MCF 10A (cell line): ENCODE measurements at regions of chr2 and their contacts with region 1.

Region 1: GRCh38 chr2:72973566-72974435 is 56.5 kb downstream of the EMX1 start:
- DNase-seq: peak; percentile 64
- H3K4me3 Mint-ChIP-seq: no peak overlapping the region
- H3K27ac Mint-ChIP-seq: no peak overlapping the region
- H3K4me1 Mint-ChIP-seq: no peaks in the 10 kb centered on the region
- H3K27me3 Mint-ChIP-seq: no peaks in the 10 kb centered on the region
- CTCF ChIP-seq: peak; percentile 85

Region 2: GRCh38 chr2:72984172-72984671 is 10.4 kb after region 1 on chr2:
- CTCF ChIA-PET with region 1: interaction called, 19 read pairs
- POLR2A ChIA-PET with region 1: no interaction called
- intact Hi-C with region 1: no loop called
- DNase-seq: no peak
- H3K4me3 Mint-ChIP-seq: no peak overlapping the region
- H3K27ac Mint-ChIP-seq: no peak overlapping the region
- H3K4me1 Mint-ChIP-seq: peaks cover 9% of the 10 kb centered on the region
- H3K27me3 Mint-ChIP-seq: no peaks in the 10 kb centered on the region
- CTCF ChIP-seq: no peak

Region 3: DNA sequence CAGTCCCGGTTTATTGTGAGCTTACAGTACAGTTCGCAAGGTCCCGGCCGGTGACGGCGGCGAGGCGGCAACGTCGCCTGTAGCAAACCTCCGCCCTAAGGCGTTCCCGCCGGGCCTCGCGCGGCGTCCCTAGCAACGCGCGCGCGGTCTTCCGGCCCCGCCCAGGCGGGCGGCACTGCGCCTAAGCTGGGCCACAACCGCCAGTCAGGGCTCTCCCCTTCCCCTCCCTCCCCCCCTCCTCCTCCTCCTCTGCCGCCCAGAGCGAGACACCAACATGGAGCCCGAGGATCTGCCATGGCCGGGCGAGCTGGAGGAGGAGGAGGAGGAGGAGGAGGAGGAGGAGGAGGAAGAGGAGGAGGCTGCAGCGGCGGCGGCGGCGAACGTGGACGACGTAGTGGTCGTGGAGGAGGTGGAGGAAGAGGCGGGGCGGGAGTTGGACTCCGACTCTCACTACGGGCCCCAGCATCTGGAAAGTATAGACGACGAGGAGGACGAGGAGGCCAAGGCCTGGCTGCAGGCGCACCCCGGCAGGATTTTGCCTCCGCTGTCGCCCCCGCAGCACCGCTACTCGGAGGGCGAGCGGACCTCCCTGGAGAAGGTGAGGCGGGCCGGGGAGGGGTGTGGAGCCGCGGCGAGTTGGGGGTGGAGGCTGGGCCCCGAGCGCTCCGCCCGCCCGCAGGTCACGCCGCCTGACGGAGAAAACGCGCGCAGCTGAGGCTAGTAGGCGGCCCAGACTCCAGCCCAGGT is 412.0 kb after region 1 on chr2 and contains the start of gene ALMS1:
- CTCF ChIA-PET with region 1: no interaction called
- POLR2A ChIA-PET with region 1: no interaction called
- intact Hi-C with region 1: no loop called
- DNase-seq: peak; percentile 82
- H3K4me3 Mint-ChIP-seq: peak within 1 kb of the TSS; percentile 86
- H3K27ac Mint-ChIP-seq: peak within 1 kb of the TSS; percentile 89
- H3K4me1 Mint-ChIP-seq: peaks cover 13% of the 10 kb centered on the region
- H3K27me3 Mint-ChIP-seq: peaks cover 28% of the 10 kb centered on the region
- CTCF ChIP-seq: no peak
- total RNA-seq, gene ALMS1: 8.3 and 9.3 TPM in 2 replicates